ENCODE measurements at regions of chr15 and their contacts with region 1.

Region 1: DNA sequence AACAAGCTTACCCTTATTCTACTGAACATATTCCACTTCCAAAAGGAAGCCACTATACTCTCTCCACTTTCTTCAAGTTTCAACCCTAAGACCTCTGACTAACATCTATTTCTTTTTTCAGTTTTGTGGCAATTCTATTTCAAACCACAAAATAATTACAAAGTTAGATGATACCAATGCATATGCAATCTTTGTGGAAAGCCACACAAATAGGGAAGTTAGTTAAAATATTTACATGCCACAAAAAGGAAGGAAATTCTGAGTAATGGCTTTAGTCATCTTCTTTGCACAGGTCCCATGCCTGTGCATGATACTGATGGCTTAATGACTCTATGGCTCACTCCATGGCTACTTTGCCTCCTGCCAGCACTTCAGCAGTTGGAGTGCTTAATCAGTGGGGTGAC is 57.0 kb upstream of the MCTP2 start:
- DNase-seq: peak; percentile 16
- ATAC-seq: peak; percentile 95
- H3K4me3 Mint-ChIP-seq: no peak overlapping the region
- H3K27ac Mint-ChIP-seq: no peak overlapping the region
- H3K4me1 Mint-ChIP-seq: peaks cover 25% of the 10 kb centered on the region
- H3K27me3 Mint-ChIP-seq: peaks cover 7% of the 10 kb centered on the region

Region 2: DNA sequence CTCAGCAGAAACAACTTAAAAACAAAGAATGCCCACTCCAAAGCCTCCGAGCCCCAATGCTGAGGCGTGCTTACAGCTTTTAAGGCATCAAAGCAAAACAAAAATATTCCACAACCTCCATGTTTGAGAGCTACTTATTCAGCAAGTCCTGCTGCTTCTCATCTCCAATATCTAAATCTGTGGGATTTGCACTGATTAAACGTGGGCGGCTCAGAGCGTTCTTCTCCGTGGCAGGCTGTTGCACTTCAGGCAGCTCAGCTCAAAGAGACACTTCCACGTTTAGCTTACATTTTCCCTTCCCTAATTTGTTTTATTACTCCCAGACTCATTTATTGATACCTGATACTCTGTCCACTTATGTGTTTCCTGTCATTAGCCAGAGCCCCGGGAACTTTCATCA is 225.7 kb before region 1 on chr15:
- CTCF ChIA-PET with region 1: no interaction called
- POLR2A ChIA-PET with region 1: no interaction called
- intact Hi-C with region 1: no loop called
- DNase-seq: no peak
- ATAC-seq: no peak
- H3K4me3 Mint-ChIP-seq: no peak overlapping the region
- H3K27ac Mint-ChIP-seq: no peak overlapping the region
- H3K4me1 Mint-ChIP-seq: no peaks in the 10 kb centered on the region
- H3K27me3 Mint-ChIP-seq: no peaks in the 10 kb centered on the region

Region 3: DNA sequence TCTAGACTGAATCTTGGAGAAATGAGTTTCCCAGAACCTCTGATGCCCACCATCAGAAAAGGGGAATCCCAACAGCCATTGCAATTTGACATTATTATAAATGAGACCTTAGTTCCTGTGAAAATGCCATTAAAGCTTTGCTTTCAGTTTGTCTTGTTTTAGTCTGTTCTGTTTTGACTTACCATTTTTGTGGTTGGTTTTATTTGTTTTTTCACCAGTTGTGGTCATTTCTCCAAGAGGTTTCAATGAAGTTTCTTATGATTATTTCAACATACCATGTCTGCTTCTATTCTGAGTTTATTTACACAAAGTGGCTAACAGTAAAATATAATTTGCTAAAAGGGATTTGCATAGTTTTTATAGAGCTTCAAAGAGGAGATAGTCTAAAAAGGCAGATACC is 118.1 kb before region 1 on chr15:
- CTCF ChIA-PET with region 1: no interaction called
- POLR2A ChIA-PET with region 1: no interaction called
- intact Hi-C with region 1: no loop called
- DNase-seq: no peak
- ATAC-seq: no peak
- H3K4me3 Mint-ChIP-seq: no peak overlapping the region
- H3K27ac Mint-ChIP-seq: no peak overlapping the region
- H3K4me1 Mint-ChIP-seq: no peaks in the 10 kb centered on the region
- H3K27me3 Mint-ChIP-seq: peaks cover 14% of the 10 kb centered on the region

Region 4: DNA sequence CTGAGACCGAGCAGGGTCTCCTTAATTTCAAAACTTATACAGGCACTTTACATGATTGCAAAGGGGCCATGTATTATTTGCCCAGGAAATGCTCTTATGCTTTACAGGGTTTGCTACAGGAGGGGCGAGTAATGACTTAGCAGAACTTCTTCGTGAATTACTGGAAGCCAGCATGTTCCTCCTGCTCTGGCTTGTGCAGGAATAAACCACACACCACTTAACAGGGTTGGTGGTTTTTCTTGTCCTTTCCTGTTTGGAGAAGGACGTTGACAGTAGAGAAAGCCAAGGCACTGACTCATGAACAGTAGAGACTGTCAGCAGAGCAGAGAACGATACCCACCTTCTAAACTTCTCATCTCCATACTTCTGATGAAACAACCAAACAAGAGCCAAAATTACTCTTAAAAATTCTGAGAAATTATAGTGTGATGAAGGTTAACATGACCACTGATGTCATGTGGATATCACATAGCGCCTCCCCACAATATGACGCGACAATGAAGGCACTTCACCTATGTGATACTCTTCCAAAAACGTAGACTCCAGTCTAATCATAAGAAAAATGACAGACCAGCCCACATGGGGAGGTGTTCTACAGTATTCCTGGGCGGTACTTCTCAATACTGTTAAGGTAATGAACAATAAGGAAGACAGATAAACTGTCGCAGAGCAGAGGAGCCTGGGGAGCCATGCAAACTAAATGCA is 32.2 kb after region 1 on chr15:
- CTCF ChIA-PET with region 1: interaction called, 5 read pairs
- POLR2A ChIA-PET with region 1: no interaction called
- intact Hi-C with region 1: loop called (anchors 1 to 2 kb)
- DNase-seq: peak; percentile 69
- ATAC-seq: peak; percentile 95
- H3K4me3 Mint-ChIP-seq: peak overlapping the region; percentile 21
- H3K27ac Mint-ChIP-seq: peak overlapping the region; percentile 77
- H3K4me1 Mint-ChIP-seq: peaks cover 16% of the 10 kb centered on the region
- H3K27me3 Mint-ChIP-seq: peaks cover 25% of the 10 kb centered on the region

Measured in activated CD4-positive, alpha-beta T cell treated with anti-CD3 and anti-CD28 coated beads for 36 hours (primary cell).